ENCODE measurements at regions of chr1 and their contacts with region 1.

Region 1: GRCh38 chr1:205631727-205632373 is at the start of gene ELK4:
- DNase-seq: peak; percentile 99
- H3K4me3 ChIP-seq: peak within 1 kb of the TSS; percentile 67 to 97 (median 78)
- H3K27ac ChIP-seq: peak within 1 kb of the TSS; percentile 97 to 100 (median 99)
- H3K4me1 ChIP-seq: peaks cover 12 to 40% (median 30%) of the 10 kb centered on the region in 4 donors
- H3K27me3 ChIP-seq: no peaks in the 10 kb centered on the region
- CTCF ChIP-seq: peak; percentile 64 to 91 (median 77)
- EP300 ChIP-seq: no peak
- POLR2A ChIP-seq: peak; percentile 91
- total RNA-seq, gene ELK4: 16.0 to 24.1 (median 19.7) TPM

Region 2: DNA sequence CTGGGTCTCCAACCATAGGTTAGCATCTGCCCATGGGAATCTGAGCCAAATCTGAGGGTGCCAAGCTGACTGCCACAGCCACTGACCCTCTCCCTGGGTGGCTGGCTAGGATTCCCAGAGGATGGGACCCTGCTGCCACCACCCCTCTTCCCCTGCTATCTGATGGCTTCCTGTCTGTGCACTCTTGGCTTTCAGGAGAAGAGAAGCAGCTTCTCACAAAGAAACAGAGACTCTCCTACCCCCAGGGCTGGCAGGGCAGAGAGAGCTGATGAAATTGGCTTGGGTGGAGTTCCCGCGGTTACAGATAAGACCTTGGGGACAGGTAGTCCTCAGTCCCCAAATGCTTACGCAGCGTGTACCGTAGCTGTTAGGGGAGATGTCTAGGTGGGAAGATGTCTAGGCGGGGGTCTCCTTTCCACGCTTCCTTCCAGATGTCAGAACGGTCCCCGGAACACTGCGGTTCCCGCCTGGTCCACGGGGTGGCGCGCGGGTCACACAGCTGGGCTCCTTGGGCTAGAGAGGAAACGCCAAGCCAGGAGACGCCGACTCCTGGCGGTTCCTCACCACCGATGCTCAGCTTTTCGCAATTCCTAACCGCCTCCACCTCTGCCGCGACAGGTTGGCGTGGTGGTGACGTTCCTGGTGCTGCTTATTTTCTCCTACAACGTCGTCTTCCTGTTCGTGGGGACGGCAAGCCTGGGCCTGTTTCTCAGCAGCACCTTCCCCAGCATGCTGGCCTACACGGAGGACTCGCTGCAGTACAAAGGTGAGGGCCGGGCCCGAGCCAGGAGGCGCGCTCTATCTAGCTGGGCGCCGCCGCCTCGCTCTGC is 40.1 kb before region 1 on chr1:
- in situ Hi-C with region 1: loop called in 2 of 4 experiments (anchors 5 kb)
- intact Hi-C with region 1: loop called (anchors 10 kb)
- DNase-seq: peak; percentile 93
- H3K4me3 ChIP-seq: peak overlapping the region in 3 of 4 donors; percentile 23 to 56 (median 33)
- H3K27ac ChIP-seq: peak overlapping the region; percentile 70 to 77 (median 74)
- H3K4me1 ChIP-seq: peaks cover 3 to 39% (median 14%) of the 10 kb centered on the region in 4 donors
- H3K27me3 ChIP-seq: no peaks in the 10 kb centered on the region
- CTCF ChIP-seq: peak; percentile 95 to 99 (median 98)
- EP300 ChIP-seq: no peak
- POLR2A ChIP-seq: peak; percentile 32